T-cell (primary cell): ENCODE measurements at regions of chr16 and their contacts with region 1.

Region 1: GRCh38 chr16:25224731-25225319 is 8.1 kb downstream of the AQP8 start:
- DNase-seq: no peak
- ATAC-seq: no peak
- H3K4me3 ChIP-seq: no peak overlapping the region
- H3K4me3 Mint-ChIP-seq: no peak overlapping the region
- H3K27ac ChIP-seq: no peak overlapping the region
- H3K27ac Mint-ChIP-seq: no peak overlapping the region
- H3K4me1 ChIP-seq: peaks cover 0 to 5% of the 10 kb centered on the region in 2 experiments
- H3K4me1 Mint-ChIP-seq: no peaks in the 10 kb centered on the region
- H3K27me3 ChIP-seq: no peaks in the 10 kb centered on the region
- H3K27me3 Mint-ChIP-seq: no peaks in the 10 kb centered on the region

Region 2: GRCh38 chr16:25024900-25025299 is 199.9 kb before region 1 on chr16:
- CTCF ChIA-PET with region 1: interaction called in 1 of 2 experiments, 3 read pairs
- POLR2A ChIA-PET with region 1: interaction called in 1 of 2 experiments, 13 read pairs
- DNase-seq: no peak
- ATAC-seq: no peak
- H3K4me3 ChIP-seq: no peak overlapping the region
- H3K4me3 Mint-ChIP-seq: no peak overlapping the region
- H3K27ac ChIP-seq: no peak overlapping the region
- H3K27ac Mint-ChIP-seq: no peak overlapping the region
- H3K4me1 ChIP-seq: peaks cover 0 to 5% of the 10 kb centered on the region in 2 experiments
- H3K4me1 Mint-ChIP-seq: peaks cover 10 to 17% (median 16%) of the 10 kb centered on the region in 3 donors
- H3K27me3 ChIP-seq: no peaks in the 10 kb centered on the region
- H3K27me3 Mint-ChIP-seq: no peaks in the 10 kb centered on the region

Region 3: DNA sequence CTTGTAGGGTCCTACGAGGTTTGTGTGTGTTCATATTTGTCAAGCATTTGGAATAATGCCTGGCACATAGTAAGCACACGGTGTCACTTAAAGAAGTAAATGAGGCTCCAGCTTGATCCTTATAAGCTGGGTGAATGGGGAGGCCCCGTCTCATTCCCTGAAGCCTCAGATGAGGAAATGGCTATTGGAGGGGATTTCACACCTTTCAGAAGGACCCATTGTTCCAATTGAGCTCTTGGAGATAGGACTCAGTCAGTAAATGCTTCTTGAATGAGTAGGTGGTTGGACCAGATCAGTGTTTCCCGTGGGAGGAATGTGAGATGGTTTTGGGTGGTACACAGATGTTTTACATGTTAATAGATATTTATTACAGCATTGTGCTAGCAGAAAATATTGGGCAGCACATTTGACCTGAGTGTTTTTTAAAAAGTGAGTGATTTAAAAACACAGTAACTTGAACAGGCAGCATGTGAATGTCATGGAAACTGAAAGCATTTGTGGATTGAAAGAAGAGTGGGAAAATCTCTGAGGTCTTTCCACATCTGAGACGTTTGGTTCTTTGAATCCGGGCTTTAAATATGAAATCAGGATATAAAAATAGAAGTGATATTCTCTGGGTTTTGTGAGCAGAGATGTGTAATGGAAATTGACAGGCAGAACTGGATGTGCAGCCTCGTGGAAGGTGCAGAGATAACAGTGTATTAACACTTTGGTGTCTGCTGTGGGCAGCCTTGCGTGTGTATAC is 173.2 kb before region 1 on chr16:
- CTCF ChIA-PET with region 1: interaction called in 1 of 2 experiments, 12 read pairs
- POLR2A ChIA-PET with region 1: interaction called, 4 read pairs
- DNase-seq: no peak
- ATAC-seq: no peak
- H3K4me3 ChIP-seq: no peak overlapping the region
- H3K4me3 Mint-ChIP-seq: peak overlapping the region; percentile 51 to 91 (median 72)
- H3K27ac ChIP-seq: peak overlapping the region; percentile 88
- H3K27ac Mint-ChIP-seq: peak overlapping the region; percentile 90 to 98
- H3K4me1 ChIP-seq: peaks cover 22 to 46% of the 10 kb centered on the region in 2 experiments
- H3K4me1 Mint-ChIP-seq: peaks cover 51 to 54% (median 53%) of the 10 kb centered on the region in 3 donors
- H3K27me3 ChIP-seq: no peaks in the 10 kb centered on the region
- H3K27me3 Mint-ChIP-seq: no peaks in the 10 kb centered on the region

Region 4: DNA sequence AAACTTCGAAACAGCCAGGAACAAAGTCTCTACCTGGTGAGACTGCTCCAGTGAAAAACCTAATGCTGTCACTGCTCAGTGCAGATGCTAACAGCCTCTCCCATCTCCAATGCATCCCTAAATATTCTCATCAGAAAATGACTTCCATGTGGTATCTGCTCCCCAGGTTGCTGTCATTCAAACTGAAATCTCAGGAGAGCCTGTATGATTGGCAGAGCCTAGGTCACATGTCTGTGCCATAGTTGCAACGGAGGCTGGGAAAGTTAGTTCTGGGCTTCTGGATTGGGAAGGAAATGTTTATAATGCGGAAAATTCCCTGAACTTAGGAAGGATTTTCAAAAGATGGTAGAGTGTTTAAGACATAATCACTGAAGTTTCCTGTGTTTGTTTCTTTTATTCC is 239.2 kb after region 1 on chr16:
- CTCF ChIA-PET with region 1: no interaction called
- POLR2A ChIA-PET with region 1: no interaction called
- DNase-seq: no peak
- ATAC-seq: no peak
- H3K4me3 ChIP-seq: no peak overlapping the region
- H3K4me3 Mint-ChIP-seq: no peak overlapping the region
- H3K27ac ChIP-seq: no peak overlapping the region
- H3K27ac Mint-ChIP-seq: no peak overlapping the region
- H3K4me1 ChIP-seq: no peaks in the 10 kb centered on the region
- H3K4me1 Mint-ChIP-seq: no peaks in the 10 kb centered on the region
- H3K27me3 ChIP-seq: no peaks in the 10 kb centered on the region
- H3K27me3 Mint-ChIP-seq: peaks cover 9 to 13% of the 10 kb centered on the region in 2 donors

Region 5: DNA sequence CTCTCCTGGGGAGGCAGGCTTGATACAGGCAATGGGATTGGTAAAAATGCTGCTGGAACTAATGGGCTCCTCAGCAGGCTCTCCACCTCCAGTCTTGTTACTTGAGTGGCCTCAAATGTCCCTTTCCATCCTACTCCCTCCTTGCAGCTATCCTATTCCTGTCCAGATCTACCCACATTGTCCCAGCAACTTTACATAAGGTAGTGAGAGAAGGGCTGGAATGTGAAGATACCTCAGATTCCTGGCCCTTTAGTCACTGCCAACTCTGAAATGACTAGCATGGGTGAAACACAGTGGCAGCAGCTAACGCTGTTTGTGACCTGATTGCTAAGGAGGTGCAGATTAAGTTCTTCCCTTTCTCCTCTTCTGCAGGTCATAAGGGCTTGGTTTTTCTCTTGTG is 256.8 kb after region 1 on chr16:
- CTCF ChIA-PET with region 1: no interaction called
- POLR2A ChIA-PET with region 1: no interaction called
- DNase-seq: no peak
- ATAC-seq: no peak
- H3K4me3 ChIP-seq: no peak overlapping the region
- H3K4me3 Mint-ChIP-seq: no peak overlapping the region
- H3K27ac ChIP-seq: no peak overlapping the region
- H3K27ac Mint-ChIP-seq: no peak overlapping the region
- H3K4me1 ChIP-seq: no peaks in the 10 kb centered on the region
- H3K4me1 Mint-ChIP-seq: no peaks in the 10 kb centered on the region
- H3K27me3 ChIP-seq: peaks cover 0 to 3% of the 10 kb centered on the region in 2 experiments
- H3K27me3 Mint-ChIP-seq: peaks cover 0 to 6% of the 10 kb centered on the region in 2 donors